ENCODE measurements at regions of chr2 and their contacts with region 1.

Region 1: DNA sequence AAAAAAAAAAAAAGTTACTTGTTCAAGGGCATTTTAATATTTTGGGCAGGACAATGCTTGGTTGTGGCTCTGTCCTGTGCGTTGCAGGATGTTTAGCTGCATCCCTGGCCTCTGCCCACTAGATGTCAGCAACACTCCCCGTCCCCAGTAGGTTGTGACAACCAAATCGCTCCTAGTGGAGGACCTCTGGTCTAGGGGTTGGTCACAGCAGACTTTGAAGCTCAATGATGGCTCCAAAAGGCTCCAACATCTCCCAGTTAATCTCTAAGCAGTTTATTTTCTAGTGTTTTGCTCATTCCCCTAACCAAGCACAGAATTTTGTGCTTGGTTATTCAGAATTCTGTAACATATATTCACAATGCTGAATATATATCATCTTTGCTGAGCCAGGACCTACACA is 67.0 kb downstream of the CHRNA1 start:
- DNase-seq: no peak
- ATAC-seq: peak; percentile 98
- H3K4me3 ChIP-seq: no peak overlapping the region
- H3K27ac ChIP-seq: no peak overlapping the region
- H3K4me1 ChIP-seq: no peaks in the 10 kb centered on the region
- H3K27me3 ChIP-seq: no peaks in the 10 kb centered on the region; a peak in 2 of 4 replicates
- CTCF ChIP-seq: peak; percentile 89 to 91 (median 89)
- EP300 ChIP-seq: no peak
- POLR2A ChIP-seq: no peak
- RAD21 ChIP-seq: peak; percentile 66

Region 2: DNA sequence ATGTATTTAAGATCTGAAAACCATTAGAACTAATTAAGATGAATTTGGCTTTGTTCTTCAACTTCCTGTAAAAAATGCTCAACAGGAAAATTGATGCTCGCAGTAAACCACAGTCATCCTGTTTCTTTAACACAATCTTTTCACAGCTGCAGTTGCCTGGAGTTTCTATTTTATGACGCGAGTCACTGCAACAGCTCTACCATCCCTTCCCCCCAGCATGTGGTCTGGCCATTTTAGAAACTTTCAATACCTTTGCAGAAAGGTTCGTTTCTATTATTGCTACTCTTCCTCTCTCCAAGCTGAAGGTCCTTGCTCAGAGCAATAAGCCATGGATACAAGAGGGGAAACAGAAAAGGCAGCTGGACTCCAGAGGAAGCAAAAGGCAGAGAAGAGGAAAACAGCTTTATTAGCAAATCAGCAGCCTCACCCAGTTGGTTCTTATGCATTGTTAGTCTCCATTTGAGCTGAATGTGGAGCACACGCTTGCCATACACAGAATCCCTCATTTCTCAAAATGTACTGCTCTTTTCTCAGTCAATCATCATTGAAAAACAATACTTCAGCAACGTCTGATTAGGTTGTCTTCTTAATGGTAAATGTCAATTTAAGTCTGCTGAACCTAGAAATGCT is 103.6 kb before region 1 on chr2:
- CTCF ChIA-PET with region 1: interaction called, 534 read pairs
- POLR2A ChIA-PET with region 1: no interaction called
- RAD21 ChIA-PET with region 1: interaction called, 3 read pairs
- SMC1A ChIA-PET with region 1: interaction called, 3 read pairs
- in situ Hi-C with region 1: loop called (anchors 25 kb)
- intact Hi-C with region 1: no loop called
- DNase-seq: peak; percentile 90
- ATAC-seq: peak; percentile 65
- H3K4me3 ChIP-seq: peak overlapping the region; percentile 58
- H3K27ac ChIP-seq: peak overlapping the region; percentile 95
- H3K4me1 ChIP-seq: peaks cover 20% of the 10 kb centered on the region
- H3K27me3 ChIP-seq: no peaks in the 10 kb centered on the region
- CTCF ChIP-seq: no peak
- EP300 ChIP-seq: peak; percentile 88 to 96
- POLR2A ChIP-seq: peak; percentile 53
- RAD21 ChIP-seq: no peak

Region 3: GRCh38 chr2:174654419-174654941 is 42.8 kb before region 1 on chr2:
- CTCF ChIA-PET with region 1: interaction called, 16 read pairs
- POLR2A ChIA-PET with region 1: no interaction called
- RAD21 ChIA-PET with region 1: no interaction called
- SMC1A ChIA-PET with region 1: no interaction called
- in situ Hi-C with region 1: no loop called
- intact Hi-C with region 1: no loop called
- DNase-seq: no peak
- ATAC-seq: no peak
- H3K4me3 ChIP-seq: no peak overlapping the region
- H3K27ac ChIP-seq: no peak overlapping the region
- H3K4me1 ChIP-seq: no peaks in the 10 kb centered on the region
- H3K27me3 ChIP-seq: no peaks in the 10 kb centered on the region
- CTCF ChIP-seq: no peak
- EP300 ChIP-seq: no peak
- POLR2A ChIP-seq: no peak
- RAD21 ChIP-seq: no peak

Region 4: GRCh38 chr2:174748948-174749347 is 51.7 kb after region 1 on chr2:
- CTCF ChIA-PET with region 1: interaction called, 16 read pairs
- POLR2A ChIA-PET with region 1: no interaction called
- RAD21 ChIA-PET with region 1: interaction called, 9 read pairs
- SMC1A ChIA-PET with region 1: interaction called, 21 read pairs
- in situ Hi-C with region 1: no loop called
- intact Hi-C with region 1: loop called (anchors 2 kb)
- DNase-seq: no peak
- ATAC-seq: peak; percentile 58
- H3K4me3 ChIP-seq: no peak overlapping the region
- H3K27ac ChIP-seq: no peak overlapping the region
- H3K4me1 ChIP-seq: peaks cover 24% of the 10 kb centered on the region
- H3K27me3 ChIP-seq: no peaks in the 10 kb centered on the region; a peak in 2 of 4 replicates
- CTCF ChIP-seq: peak; percentile 75 to 83 (median 78)
- EP300 ChIP-seq: no peak
- POLR2A ChIP-seq: no peak
- RAD21 ChIP-seq: peak; percentile 87

Region 5: DNA sequence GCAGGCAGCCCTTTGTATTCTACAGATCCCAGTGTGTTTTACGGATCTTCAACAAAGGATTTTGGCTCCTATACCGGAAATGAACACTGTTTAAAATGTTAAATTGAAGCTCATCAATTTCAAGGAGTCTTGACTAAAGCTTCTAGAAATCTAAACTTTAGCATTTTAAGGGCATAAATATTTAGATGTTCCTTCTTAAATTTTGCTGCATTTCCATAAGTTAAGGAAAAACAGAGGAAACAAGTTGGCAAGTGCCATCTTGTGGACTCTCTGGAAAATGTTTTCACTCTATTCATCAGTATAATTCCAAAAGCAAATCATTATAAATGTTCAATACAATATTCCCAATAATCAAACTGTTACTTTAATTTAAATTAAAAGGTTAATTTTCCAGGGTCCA is 288.4 kb after region 1 on chr2:
- CTCF ChIA-PET with region 1: interaction called, 22 read pairs
- POLR2A ChIA-PET with region 1: no interaction called
- RAD21 ChIA-PET with region 1: no interaction called
- SMC1A ChIA-PET with region 1: interaction called, 3 read pairs
- in situ Hi-C with region 1: no loop called
- intact Hi-C with region 1: loop called (anchors 2 kb)
- DNase-seq: no peak
- ATAC-seq: no peak
- H3K4me3 ChIP-seq: no peak overlapping the region
- H3K27ac ChIP-seq: no peak overlapping the region
- H3K4me1 ChIP-seq: no peaks in the 10 kb centered on the region
- H3K27me3 ChIP-seq: no peaks in the 10 kb centered on the region
- CTCF ChIP-seq: peak in 1 of 3 experiments; percentile 13; a peak in 2 of 6 replicates
- EP300 ChIP-seq: no peak
- POLR2A ChIP-seq: no peak
- RAD21 ChIP-seq: 0 out of 2 replicates have a peak, but pooled peaks have one; percentile 8